ENCODE measurements at regions of chr6 and their contacts with region 1.

Region 1: GRCh38 chr6:80605165-80605989 is 498.9 kb downstream of the BCKDHB start:
- DNase-seq: no peak
- ATAC-seq: peak; percentile 58

Region 2: DNA sequence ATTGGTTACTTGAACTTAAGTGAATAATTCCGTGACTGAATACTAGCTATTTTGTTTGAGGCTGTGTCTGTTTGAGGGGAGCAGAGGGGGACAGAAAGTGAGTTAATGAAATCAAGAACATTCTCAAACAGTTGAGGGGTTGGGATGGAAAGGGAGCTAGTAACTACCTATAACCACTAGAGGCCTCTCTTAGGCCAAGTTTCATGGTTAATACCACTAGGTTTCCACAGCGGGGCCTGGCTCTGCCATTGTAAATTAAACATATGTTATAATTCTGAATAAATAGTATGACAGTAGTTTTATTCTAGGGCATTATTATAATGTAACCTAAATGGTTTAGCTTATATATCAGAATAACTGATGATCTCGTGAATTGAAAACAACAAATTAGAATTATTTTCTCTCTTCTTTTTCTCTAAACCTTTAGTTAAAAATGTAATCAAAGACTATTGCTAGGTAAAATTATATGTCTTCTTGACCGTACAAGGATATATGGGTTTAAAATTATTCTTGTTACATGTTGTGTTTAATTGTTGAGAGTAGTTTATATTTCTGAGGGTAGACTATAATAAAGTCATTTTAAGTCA is 390.8 kb before region 1 on chr6:
- intact Hi-C with region 1: loop called (anchors 5 kb)
- DNase-seq: peak; percentile 38
- ATAC-seq: peak; percentile 77